Posterior cingulate gyrus (tissue), 11 donors: ENCODE measurements at regions of chr19 and their contacts with region 1.

Region 1: GRCh38 chr19:39970675-39971379 is at the start of gene PSMC4:
- DNase-seq: peak; percentile 97 to 100 (median 98)

Region 2: GRCh38 chr19:39792999-39793546 is 177.8 kb before region 1 on chr19:
- intact Hi-C with region 1: loop called (anchors 2 kb)
- DNase-seq: peak in 9 of 10 donors; percentile 30 to 94 (median 64)

Region 3: GRCh38 chr19:39818626-39819097 is 152.2 kb before region 1 on chr19:
- intact Hi-C with region 1: no loop called
- DNase-seq: no peak

Region 4: GRCh38 chr19:39833464-39834286 is 137.2 kb before region 1 on chr19 and contains the start of gene DYRK1B:
- intact Hi-C with region 1: loop called (anchors 5 kb)
- DNase-seq: peak; percentile 95 to 100 (median 97)

Region 5: DNA sequence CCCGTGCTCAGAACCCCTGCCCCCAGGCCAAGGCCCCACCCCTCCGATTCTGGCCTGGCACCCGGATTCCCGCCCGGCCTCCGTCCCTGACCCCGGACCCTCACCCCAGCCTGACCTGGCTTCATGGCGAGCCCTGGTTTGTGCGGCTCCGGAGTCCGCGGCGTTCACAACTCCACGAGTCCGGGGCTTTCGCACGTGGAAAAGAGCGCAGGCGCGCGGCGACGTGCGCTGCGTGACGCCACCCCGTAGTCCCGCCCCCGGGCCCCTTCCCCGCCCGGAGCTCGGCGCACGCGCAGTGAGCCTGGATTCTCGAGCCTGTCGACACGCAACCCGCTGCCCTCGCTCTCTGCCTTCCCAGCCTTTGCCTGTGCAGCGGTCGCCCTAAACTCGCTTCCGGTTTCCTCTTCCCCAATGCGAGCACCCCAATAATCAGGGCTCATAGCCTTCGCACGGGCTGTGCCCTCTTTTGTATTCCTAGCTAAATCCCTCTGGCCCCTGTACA is 124.6 kb before region 1 on chr19 and contains the start of gene FBL:
- intact Hi-C with region 1: loop called (anchors 2 kb)
- DNase-seq: peak; percentile 92 to 99 (median 95)

Region 6: DNA sequence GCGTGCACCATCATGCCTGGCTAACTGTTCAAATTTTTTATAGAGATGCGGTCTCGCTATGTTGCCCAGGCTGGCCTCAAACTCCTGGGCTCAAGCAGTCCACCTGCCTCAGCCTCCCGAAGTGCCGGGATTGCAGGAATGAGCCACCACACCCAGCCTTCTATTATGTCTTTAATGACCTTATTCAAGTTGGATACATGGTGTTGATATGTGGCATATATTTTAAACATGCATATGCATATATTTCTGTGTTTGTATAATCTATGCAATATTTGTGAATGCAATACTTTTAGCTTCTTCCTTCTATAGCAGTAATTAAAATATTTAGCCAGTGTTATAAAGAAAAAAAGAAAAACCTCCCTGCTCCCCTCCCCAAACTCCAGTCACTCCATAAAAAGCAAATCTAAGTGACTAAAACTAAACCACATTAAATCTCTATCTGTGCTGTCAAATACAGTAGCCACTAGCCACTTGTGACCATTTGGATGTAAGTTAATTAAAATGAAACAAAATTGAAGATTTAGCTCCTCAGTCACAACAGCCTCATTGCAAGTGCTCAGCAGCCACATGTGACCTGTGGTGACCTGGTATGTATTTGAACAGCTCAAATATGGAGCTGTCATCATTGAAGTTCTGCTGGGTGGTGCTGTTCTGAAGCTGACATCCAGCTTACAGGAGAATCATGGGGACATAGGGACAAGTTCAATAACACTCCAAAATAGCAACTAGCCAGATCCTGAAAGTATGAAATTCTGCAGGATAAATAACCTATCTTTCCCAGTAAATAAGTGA is 63.8 kb before region 1 on chr19:
- intact Hi-C with region 1: no loop called
- DNase-seq: no peak

Region 7: DNA sequence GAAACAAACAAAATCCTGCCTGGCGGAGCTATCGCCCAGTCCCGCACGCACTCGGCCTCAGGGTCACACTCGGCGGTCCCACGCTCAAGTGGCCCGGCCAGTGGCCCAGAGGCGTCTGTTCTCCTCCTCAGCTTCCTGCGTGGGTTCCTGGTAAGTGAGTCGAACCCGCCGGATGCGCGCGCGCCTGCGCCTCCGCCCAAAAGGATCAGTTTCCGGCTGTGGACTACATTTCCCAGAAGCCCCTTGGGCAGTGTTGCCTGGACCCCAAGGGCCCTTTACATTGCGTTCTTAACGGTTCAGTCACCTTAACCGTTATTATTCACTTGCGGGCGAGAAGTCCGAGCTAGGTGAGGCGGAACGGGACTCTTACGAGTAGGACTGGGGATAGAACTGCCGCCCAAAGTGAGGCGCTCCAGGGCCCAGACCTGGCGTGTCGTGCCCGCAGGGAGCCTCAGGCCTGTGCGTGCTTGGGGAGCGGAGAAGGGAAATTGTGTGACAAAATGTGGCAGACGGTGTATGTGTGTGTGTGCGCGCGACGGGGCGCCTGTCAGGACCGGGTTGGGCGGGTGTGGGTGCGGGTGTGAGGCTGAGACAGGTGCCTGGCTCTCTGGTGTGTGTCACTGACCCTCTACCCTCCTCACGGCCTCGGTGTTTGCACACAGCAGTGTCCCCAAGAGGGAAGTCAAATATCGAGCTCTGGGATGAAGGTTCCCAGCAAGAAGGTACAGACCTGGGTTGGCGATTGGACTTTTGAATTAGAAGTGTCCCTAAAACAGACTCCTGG is 26.2 kb after region 1 on chr19 and contains the start of gene ZNF546:
- intact Hi-C with region 1: loop called (anchors 1 kb)
- DNase-seq: peak; percentile 82 to 99 (median 93)